Gastrocnemius medialis (tissue), 4 donors: ENCODE measurements at regions of chr15 and their contacts with region 1.

Region 1: DNA sequence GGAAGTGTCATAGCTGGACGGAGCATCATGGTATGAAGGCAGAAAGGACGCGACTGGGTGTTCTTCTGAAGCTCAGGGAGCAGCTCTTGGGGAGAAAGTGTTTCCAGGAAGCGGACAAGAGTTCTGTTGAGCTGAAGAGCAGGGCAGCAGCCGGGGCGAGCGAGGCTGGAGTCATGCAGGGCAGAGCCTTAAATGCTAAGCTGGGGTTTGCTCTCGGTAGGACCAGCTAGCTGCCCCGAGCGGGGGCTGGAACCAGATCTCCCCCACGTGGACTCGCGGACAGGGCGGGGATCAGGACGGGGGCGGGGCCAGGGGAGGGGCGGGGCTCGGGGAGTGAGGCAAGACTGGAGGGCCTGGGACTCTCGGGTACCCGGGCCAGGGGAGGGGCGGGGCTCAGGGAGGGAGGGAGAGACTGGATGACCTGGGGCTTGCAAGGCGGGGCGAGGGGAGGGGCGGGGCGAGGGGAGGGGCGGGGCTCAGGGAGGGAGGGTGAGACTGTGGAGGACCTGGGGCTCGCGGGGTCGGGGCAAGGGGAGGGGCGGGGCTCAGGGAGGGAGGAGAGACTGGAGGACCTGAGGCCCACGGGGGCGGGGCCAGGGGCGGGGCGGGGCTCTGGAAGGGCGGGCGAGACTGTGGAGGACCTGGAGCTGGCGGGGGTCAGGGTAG is 486 bp upstream of the FAH start:
- DNase-seq: peak; percentile 97 to 99
- ATAC-seq: peak; percentile 66 to 77
- H3K4me3 ChIP-seq: peak overlapping the region; percentile 64 to 91 (median 71)
- H3K27ac ChIP-seq: peak overlapping the region; percentile 86 to 91 (median 90)
- H3K4me1 ChIP-seq: peaks cover 38 to 45% of the 10 kb centered on the region in 2 donors
- H3K27me3 ChIP-seq: no peaks in the 10 kb centered on the region
- CTCF ChIP-seq: no peak
- POLR2A ChIP-seq: peak; percentile 27 to 74

Region 2: GRCh38 chr15:78872972-78873792 is 1279.1 kb before region 1 on chr15:
- in situ Hi-C with region 1: no loop called
- intact Hi-C with region 1: loop called (anchors 5 kb)
- DNase-seq: peak; percentile 48 to 62
- ATAC-seq: peak; percentile 69 to 74
- H3K4me3 ChIP-seq: peak overlapping the region; percentile 84 to 100 (median 96)
- H3K27ac ChIP-seq: peak overlapping the region; percentile 94 to 100 (median 99)
- H3K4me1 ChIP-seq: peaks cover 38 to 39% of the 10 kb centered on the region in 2 donors
- H3K27me3 ChIP-seq: no peaks in the 10 kb centered on the region
- CTCF ChIP-seq: peak in 3 of 5 experiments; percentile 8 to 36 (median 27)
- POLR2A ChIP-seq: peak; percentile 91

Region 3: GRCh38 chr15:79896637-79897379 is 255.5 kb before region 1 on chr15 and contains the start of gene MTHFS:
- in situ Hi-C with region 1: loop called in 2 of 4 experiments (anchors 25 kb)
- intact Hi-C with region 1: loop called (anchors 5 kb)
- DNase-seq: peak; percentile 30 to 65
- ATAC-seq: peak; percentile 87 to 89
- H3K4me3 ChIP-seq: peak within 1 kb of the TSS; percentile 71 to 94 (median 84)
- H3K27ac ChIP-seq: peak within 1 kb of the TSS; percentile 85 to 92 (median 90)
- H3K4me1 ChIP-seq: peaks cover 5 to 10% of the 10 kb centered on the region in 2 donors
- H3K27me3 ChIP-seq: no peaks in the 10 kb centered on the region
- CTCF ChIP-seq: peak in 2 of 5 experiments; percentile 42 to 66
- POLR2A ChIP-seq: peak; percentile 40 to 66
- total RNA-seq, gene MTHFS: 7.0 to 16.7 (median 14.6) TPM

Region 4: GRCh38 chr15:79923515-79924395 is 228.6 kb before region 1 on chr15:
- in situ Hi-C with region 1: loop called in 2 of 4 experiments (anchors 25 kb)
- intact Hi-C with region 1: no loop called
- DNase-seq: peak; percentile 69 to 90
- ATAC-seq: peak; percentile 85 to 90
- H3K4me3 ChIP-seq: peak overlapping the region; percentile 84 to 91 (median 86)
- H3K27ac ChIP-seq: peak overlapping the region; percentile 83 to 86 (median 86)
- H3K4me1 ChIP-seq: peaks cover 5 to 10% of the 10 kb centered on the region in 2 donors
- H3K27me3 ChIP-seq: peaks cover 0 to 7% (median 5%) of the 10 kb centered on the region in 3 donors
- CTCF ChIP-seq: no peak
- POLR2A ChIP-seq: peak; percentile 70 to 75

Region 5: GRCh38 chr15:80173022-80173759 is 20.9 kb after region 1 on chr15:
- in situ Hi-C with region 1: no loop called
- intact Hi-C with region 1: loop called (anchors 2 kb)
- DNase-seq: peak; percentile 67 to 87
- ATAC-seq: peak; percentile 57 to 59
- H3K4me3 ChIP-seq: no peak overlapping the region
- H3K27ac ChIP-seq: peak overlapping the region; percentile 79 to 95 (median 92)
- H3K4me1 ChIP-seq: peaks cover 23 to 25% of the 10 kb centered on the region in 2 donors
- H3K27me3 ChIP-seq: no peaks in the 10 kb centered on the region
- CTCF ChIP-seq: peak; percentile 69 to 84 (median 78)
- POLR2A ChIP-seq: no peak